ENCODE measurements at regions of chr5 and their contacts with region 1.

Region 1: DNA sequence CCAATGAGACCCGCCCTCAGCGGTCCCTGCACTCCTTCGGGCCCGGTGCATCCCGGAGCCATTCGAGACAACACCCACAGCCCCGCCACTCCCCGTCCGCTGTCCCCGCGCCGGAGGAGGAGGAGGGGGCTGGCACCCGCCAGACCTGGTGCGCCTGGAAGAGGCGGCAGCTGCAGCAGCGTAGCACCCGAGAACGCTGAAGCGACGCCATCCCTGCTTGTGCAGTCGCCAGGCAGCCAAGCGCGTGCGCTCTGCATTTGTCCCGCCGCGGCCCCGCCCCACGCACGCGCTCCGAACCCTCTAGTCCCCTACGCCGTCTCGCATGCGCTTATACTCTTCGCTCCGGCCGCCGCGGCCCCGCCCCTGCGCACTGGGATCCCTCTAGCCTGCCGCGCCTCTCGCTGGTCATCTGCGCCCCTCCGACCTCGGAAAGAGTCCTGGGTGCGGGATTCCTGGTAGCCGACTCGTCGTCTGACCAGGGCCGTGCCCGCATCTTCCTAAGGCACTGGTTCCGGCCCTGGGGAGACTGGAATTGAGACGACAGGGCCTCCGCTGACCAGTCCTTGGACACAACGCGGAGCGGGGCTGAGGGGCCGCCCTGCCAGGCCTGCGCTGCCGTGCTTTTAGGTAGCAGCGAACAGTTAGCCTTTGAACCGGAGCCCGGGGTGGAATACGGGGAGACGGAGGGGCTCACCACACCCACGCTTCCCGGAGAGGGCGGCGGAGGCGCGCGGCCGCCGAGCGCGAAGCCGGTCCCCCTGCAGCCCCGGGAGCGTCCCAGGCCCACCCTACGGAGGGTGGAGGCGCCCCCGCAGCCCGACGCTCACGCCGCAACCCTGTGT is at the start of gene MRNIP:
- DNase-seq: peak; percentile 93
- H3K4me3 Mint-ChIP-seq: peak within 1 kb of the TSS; percentile 93
- H3K27ac Mint-ChIP-seq: peak within 1 kb of the TSS; percentile 82
- H3K4me1 Mint-ChIP-seq: peaks cover 14% of the 10 kb centered on the region
- H3K27me3 Mint-ChIP-seq: no peaks in the 10 kb centered on the region
- total RNA-seq, gene MRNIP: 16.2 to 16.3 TPM

Region 2: GRCh38 chr5:178590141-178590923 is 1268.5 kb before region 1 on chr5 and contains the start of gene COL23A1:
- CTCF ChIA-PET with region 1: no interaction called
- intact Hi-C with region 1: no loop called
- DNase-seq: peak; percentile 63
- H3K4me3 Mint-ChIP-seq: peak within 1 kb of the TSS; percentile 57
- H3K27ac Mint-ChIP-seq: no peak within 1 kb of the TSS
- H3K4me1 Mint-ChIP-seq: peaks cover 7% of the 10 kb centered on the region
- H3K27me3 Mint-ChIP-seq: peaks cover 45% of the 10 kb centered on the region
- total RNA-seq, gene COL23A1: 0.07 TPM in 1 of 2 experiments, not detected in the other

Region 3: DNA sequence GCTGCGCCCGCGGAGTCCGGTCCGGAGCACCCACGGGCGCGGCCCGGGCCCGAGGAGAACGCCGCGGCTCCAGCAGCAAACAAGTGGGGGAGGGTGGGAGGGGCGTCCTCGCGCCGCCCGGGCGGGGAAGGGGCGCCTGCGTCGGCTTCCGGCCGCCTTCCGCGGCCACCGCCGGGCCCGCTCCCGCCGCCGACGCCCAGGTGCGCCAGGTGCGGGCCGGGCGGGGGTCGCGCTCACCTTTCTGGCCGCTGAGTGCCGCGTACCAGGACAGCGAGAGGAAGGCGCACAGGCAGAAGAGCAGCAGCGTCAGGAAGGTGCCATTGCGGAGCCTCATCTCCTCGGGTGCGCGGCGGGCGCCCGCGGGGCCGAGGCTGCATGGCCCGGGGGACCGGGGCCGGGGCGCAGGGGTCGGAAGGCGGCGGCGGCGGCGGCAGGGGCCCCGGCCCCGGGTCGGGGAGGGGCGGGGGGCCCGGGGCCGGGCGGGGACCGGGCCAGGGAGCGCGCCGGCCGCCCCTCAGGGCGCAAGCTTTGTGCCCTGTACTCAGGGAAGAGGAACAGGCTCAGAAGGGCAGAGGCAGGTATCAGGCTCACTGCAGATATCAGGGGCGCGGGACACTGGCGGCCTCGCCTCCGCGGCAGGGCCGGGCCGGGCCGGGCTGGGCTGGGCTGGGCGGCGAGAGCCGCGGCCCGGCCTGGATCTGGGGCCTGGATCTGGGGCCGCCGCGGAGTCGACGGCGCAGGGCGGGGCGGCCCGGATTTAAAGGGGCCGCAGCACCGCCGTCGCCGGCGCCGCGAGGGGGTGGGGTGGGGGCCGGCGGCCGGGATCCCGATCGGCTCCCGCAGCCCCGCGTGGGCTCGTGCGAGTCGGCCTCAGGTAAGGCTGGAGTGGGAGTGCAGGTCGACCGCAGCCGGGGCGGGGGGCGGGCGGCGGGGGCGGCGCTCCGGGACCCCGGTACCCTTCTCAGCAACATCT is 52.3 kb before region 1 on chr5 and contains the start of gene MGAT4B:
- CTCF ChIA-PET with region 1: interaction called, 6 read pairs
- intact Hi-C with region 1: loop called (anchors 1 kb)
- DNase-seq: peak; percentile 62
- H3K4me3 Mint-ChIP-seq: peak within 1 kb of the TSS; percentile 84
- H3K27ac Mint-ChIP-seq: no peak within 1 kb of the TSS
- H3K4me1 Mint-ChIP-seq: peaks cover 38% of the 10 kb centered on the region
- H3K27me3 Mint-ChIP-seq: no peaks in the 10 kb centered on the region
- total RNA-seq, gene MGAT4B: 57.7 to 59.9 TPM

Region 4: DNA sequence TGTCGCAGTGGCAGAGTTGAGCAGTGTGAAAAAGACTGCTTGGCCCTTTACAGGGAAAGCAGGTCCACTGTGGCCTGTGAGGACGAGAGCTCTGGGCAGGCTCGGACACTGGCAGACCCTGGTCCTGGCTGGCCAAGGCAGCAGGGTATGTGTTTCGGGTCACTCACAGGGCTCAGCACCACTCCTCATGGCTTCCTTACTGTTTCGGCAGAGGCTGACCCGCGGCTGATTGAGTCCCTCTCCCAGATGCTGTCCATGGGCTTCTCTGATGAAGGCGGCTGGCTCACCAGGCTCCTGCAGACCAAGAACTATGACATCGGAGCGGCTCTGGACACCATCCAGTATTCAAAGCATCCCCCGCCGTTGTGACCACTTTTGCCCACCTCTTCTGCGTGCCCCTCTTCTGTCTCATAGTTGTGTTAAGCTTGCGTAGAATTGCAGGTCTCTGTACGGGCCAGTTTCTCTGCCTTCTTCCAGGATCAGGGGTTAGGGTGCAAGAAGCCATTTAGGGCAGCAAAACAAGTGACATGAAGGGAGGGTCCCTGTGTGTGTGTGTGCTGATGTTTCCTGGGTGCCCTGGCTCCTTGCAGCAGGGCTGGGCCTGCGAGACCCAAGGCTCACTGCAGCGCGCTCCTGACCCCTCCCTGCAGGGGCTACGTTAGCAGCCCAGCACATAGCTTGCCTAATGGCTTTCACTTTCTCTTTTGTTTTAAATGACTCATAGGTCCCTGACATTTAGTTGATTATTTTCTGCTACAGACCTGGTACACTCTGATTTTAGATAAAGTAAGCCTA is 22.4 kb before region 1 on chr5:
- CTCF ChIA-PET with region 1: no interaction called
- intact Hi-C with region 1: loop called (anchors 1 kb)
- DNase-seq: peak; percentile 79
- H3K4me3 Mint-ChIP-seq: peak overlapping the region; percentile 9
- H3K27ac Mint-ChIP-seq: peak overlapping the region; percentile 77
- H3K4me1 Mint-ChIP-seq: peaks cover 17% of the 10 kb centered on the region
- H3K27me3 Mint-ChIP-seq: no peaks in the 10 kb centered on the region

Region 5: DNA sequence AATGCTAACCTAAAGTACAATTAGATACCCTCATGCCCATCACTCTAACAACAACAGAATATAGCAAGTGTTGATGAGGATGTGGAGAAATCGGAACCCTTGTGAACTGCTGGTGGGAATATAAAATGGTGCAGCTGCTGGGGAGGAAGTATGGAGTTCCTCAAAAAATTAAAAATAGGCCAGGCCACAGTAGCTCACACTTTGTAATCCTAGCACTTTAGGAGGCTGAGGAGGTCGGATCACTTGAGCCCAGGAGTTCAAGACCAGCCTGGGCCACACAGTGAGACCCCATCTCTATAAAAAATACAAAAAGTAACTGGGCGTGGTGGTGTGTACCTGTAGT is 17.8 kb after region 1 on chr5:
- CTCF ChIA-PET with region 1: no interaction called
- intact Hi-C with region 1: no loop called
- DNase-seq: no peak
- H3K4me3 Mint-ChIP-seq: no peak overlapping the region
- H3K27ac Mint-ChIP-seq: no peak overlapping the region
- H3K4me1 Mint-ChIP-seq: no peaks in the 10 kb centered on the region
- H3K27me3 Mint-ChIP-seq: no peaks in the 10 kb centered on the region

Region 6: GRCh38 chr5:179914032-179914755 is 55.4 kb after region 1 on chr5:
- CTCF ChIA-PET with region 1: no interaction called
- intact Hi-C with region 1: no loop called
- DNase-seq: peak; percentile 19
- H3K4me3 Mint-ChIP-seq: no peak overlapping the region
- H3K27ac Mint-ChIP-seq: no peak overlapping the region
- H3K4me1 Mint-ChIP-seq: no peaks in the 10 kb centered on the region
- H3K27me3 Mint-ChIP-seq: no peaks in the 10 kb centered on the region